Sigmoid colon (tissue), 7 donors: ENCODE measurements at regions of chr6 and their contacts with region 1.

Region 1: GRCh38 chr6:28399350-28400121 is at the start of gene ZSCAN12:
- DNase-seq: peak; percentile 90
- H3K4me3 ChIP-seq: peak within 1 kb of the TSS; percentile 65 to 79 (median 72)
- H3K27ac ChIP-seq: peak within 1 kb of the TSS; percentile 45 to 73 (median 63)
- H3K4me1 ChIP-seq: peaks cover 0 to 26% (median 25%) of the 10 kb centered on the region in 4 donors
- H3K27me3 ChIP-seq: no peaks in the 10 kb centered on the region
- CTCF ChIP-seq: peak in 2 of 4 experiments; percentile 36 to 47
- EP300 ChIP-seq: no peak
- POLR2A ChIP-seq: no peak
- total RNA-seq, gene ZSCAN12: 6.1 to 7.5 (median 6.8) TPM

Region 2: GRCh38 chr6:28383235-28384142 is 16.0 kb before region 1 on chr6:
- intact Hi-C with region 1: loop called (anchors 2 kb)
- DNase-seq: peak; percentile 94
- H3K4me3 ChIP-seq: peak overlapping the region; percentile 26 to 53 (median 50)
- H3K27ac ChIP-seq: peak overlapping the region; percentile 69 to 84 (median 80)
- H3K4me1 ChIP-seq: peaks cover 0 to 16% (median 7%) of the 10 kb centered on the region in 4 donors
- H3K27me3 ChIP-seq: no peaks in the 10 kb centered on the region
- CTCF ChIP-seq: peak in 3 of 4 experiments; percentile 39 to 51 (median 41)
- EP300 ChIP-seq: peak in 2 of 4 donors; percentile 11 to 22
- POLR2A ChIP-seq: no peak

Region 3: GRCh38 chr6:28443112-28443773 is 43.7 kb after region 1 on chr6 and contains the start of gene ZSCAN23:
- intact Hi-C with region 1: loop called (anchors 5 kb)
- DNase-seq: peak; percentile 89
- H3K4me3 ChIP-seq: peak within 1 kb of the TSS; percentile 57 to 84 (median 65)
- H3K27ac ChIP-seq: peak within 1 kb of the TSS; percentile 63 to 72 (median 68)
- H3K4me1 ChIP-seq: peaks cover 0 to 14% (median 9%) of the 10 kb centered on the region in 4 donors
- H3K27me3 ChIP-seq: peaks cover 0 to 28% (median 14%) of the 10 kb centered on the region in 3 donors
- CTCF ChIP-seq: no peak
- EP300 ChIP-seq: no peak
- POLR2A ChIP-seq: no peak
- total RNA-seq, gene ZSCAN23: 1.8 to 3.9 (median 2.5) TPM